ENCODE measurements at regions of chr1 and their contacts with region 1.

Region 1: GRCh38 chr1:200336111-200336845 is 73.6 kb downstream of the ZNF281 start:
- DNase-seq: no peak
- H3K4me3 ChIP-seq: no peak overlapping the region
- H3K27ac ChIP-seq: peak overlapping the region in 1 of 8 donors; percentile 55
- H3K4me1 ChIP-seq: peaks cover 0 to 24% (median 11%) of the 10 kb centered on the region in 6 donors
- H3K27me3 ChIP-seq: no peaks in the 10 kb centered on the region
- CTCF ChIP-seq: no peak
- POLR2A ChIP-seq: no peak

Region 2: DNA sequence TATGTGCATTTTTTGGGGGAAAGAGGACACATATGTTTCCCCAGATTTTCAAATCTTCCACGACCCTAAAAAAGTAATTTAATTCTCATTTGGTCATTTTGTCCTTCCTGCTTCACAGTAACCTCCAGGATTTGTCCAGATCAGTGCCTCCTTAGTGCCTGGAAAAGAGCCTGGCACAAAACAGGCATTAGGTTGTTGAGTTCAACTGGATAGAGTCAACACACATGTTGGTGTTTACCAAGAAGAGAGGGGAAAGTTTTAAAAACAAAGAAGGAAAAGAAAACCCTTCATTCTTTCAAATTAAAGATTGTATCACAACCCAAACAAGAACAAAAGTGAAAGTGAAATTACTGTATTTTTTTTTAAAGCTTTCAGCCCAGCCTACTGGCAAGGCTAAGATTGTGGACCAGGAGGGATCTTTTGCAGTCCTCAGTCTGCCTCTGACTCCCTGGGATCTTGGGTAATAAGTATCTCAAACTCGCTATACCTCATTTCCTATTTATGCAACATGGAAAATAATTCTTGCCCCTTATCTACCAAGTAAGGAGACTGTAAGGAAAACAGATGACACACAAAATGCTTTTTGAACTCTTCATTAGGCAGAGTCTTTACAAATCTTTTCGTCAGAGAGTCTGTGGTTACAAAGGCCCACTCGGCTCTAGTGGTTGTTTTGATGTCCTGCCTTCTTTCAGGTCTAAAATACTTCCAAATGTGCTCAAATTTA is 15.7 kb after region 1 on chr1:
- intact Hi-C with region 1: loop called (anchors 2 kb)
- DNase-seq: no peak
- H3K4me3 ChIP-seq: peak overlapping the region in 1 of 8 donors; percentile 33
- H3K27ac ChIP-seq: peak overlapping the region in 7 of 8 donors; percentile 11 to 90 (median 79)
- H3K4me1 ChIP-seq: peaks cover 0 to 53% (median 27%) of the 10 kb centered on the region in 6 donors
- H3K27me3 ChIP-seq: no peaks in the 10 kb centered on the region
- CTCF ChIP-seq: no peak
- POLR2A ChIP-seq: no peak

Region 3: GRCh38 chr1:200699871-200700270 is 363.6 kb after region 1 on chr1:
- intact Hi-C with region 1: no loop called
- DNase-seq: no peak
- H3K4me3 ChIP-seq: no peak overlapping the region
- H3K27ac ChIP-seq: no peak overlapping the region
- H3K4me1 ChIP-seq: no peaks in the 10 kb centered on the region
- H3K27me3 ChIP-seq: no peaks in the 10 kb centered on the region
- CTCF ChIP-seq: no peak
- POLR2A ChIP-seq: no peak